ENCODE measurements at regions of chr6 and their contacts with region 1.

Region 1: GRCh38 chr6:100880853-100881706 is at the start of gene ASCC3:
- DNase-seq: peak; percentile 89
- H3K4me3 Mint-ChIP-seq: peak within 1 kb of the TSS; percentile 100
- H3K27ac Mint-ChIP-seq: peak within 1 kb of the TSS; percentile 100
- H3K4me1 Mint-ChIP-seq: peaks cover 47% of the 10 kb centered on the region
- H3K27me3 Mint-ChIP-seq: peaks cover 3% of the 10 kb centered on the region
- total RNA-seq, gene ASCC3: 70.1 and 70.8 TPM in 2 replicates

Region 2: GRCh38 chr6:100185615-100186014 is 695.5 kb before region 1 on chr6:
- intact Hi-C with region 1: no loop called
- DNase-seq: no peak
- H3K4me3 Mint-ChIP-seq: no peak overlapping the region
- H3K27ac Mint-ChIP-seq: no peak overlapping the region
- H3K4me1 Mint-ChIP-seq: no peaks in the 10 kb centered on the region
- H3K27me3 Mint-ChIP-seq: no peaks in the 10 kb centered on the region

Region 3: DNA sequence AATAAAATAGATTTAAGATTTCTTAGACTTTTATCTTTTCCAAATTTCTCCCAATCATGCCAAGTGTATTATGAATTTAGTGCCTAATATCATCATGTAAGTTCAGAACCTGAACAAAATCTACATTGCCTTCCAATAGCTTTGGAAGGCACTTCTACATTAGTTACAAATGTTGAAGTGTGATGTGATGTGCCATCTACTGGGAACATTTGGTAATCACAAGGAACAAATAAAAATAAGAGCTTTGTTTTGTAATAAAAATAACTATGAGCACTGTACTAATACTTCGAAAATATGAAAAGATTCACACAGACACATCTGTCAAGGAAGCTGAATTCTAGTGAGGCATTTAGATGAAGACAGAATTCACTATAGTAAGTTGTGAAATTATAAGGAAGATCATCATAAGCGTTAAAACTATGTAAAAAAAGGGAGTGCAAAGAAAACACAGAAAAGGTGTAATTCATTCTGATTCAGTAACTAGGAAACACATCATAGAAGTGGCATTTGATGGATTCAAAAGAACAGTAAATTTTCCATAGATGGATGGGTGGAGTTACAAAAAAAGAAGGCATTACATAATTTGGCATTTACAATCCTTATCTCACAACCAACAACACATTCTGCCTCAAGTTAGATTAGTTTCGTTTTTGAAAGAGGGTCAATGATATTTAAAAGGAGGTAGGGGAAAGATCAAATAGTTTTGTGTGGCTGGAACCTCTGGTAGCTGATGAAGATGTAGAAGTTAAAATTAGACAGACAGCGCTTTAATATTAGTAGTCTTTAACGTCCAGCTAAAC is 161.0 kb before region 1 on chr6:
- intact Hi-C with region 1: loop called (anchors 10 kb)
- DNase-seq: no peak
- H3K4me3 Mint-ChIP-seq: no peak overlapping the region
- H3K27ac Mint-ChIP-seq: no peak overlapping the region
- H3K4me1 Mint-ChIP-seq: peaks cover 9% of the 10 kb centered on the region
- H3K27me3 Mint-ChIP-seq: no peaks in the 10 kb centered on the region

Region 4: GRCh38 chr6:100761841-100762240 is 119.2 kb before region 1 on chr6:
- intact Hi-C with region 1: no loop called
- DNase-seq: no peak
- H3K4me3 Mint-ChIP-seq: no peak overlapping the region
- H3K27ac Mint-ChIP-seq: no peak overlapping the region
- H3K4me1 Mint-ChIP-seq: peaks cover 12% of the 10 kb centered on the region
- H3K27me3 Mint-ChIP-seq: no peaks in the 10 kb centered on the region

Region 5: GRCh38 chr6:100865525-100865924 is 15.6 kb before region 1 on chr6:
- intact Hi-C with region 1: loop called (anchors 2 kb)
- DNase-seq: no peak
- H3K4me3 Mint-ChIP-seq: no peak overlapping the region
- H3K27ac Mint-ChIP-seq: no peak overlapping the region
- H3K4me1 Mint-ChIP-seq: peaks cover 12% of the 10 kb centered on the region
- H3K27me3 Mint-ChIP-seq: no peaks in the 10 kb centered on the region

Measured in activated T-helper 1 cell treated with anti-CD3 and anti-CD28 coated beads, Interleukin-12 subunit alpha, Interleukin-12 subunit beta, Interleukin-2, Interleukin-4 antibody, amounts not matched to agents 30 ng/mL and 10 ng/mL and 1 ng/mL, durations not matched to agents 14 hours and 24 hours and 36 hours (primary cell).